ENCODE measurements at regions of chr17 and their contacts with region 1.

Region 1: GRCh38 chr17:28951991-28952975 is 965 bp upstream of the PHF12 start:
- DNase-seq: peak; percentile 87 to 100 (median 94)
- ATAC-seq: peak; percentile 68
- H3K4me3 ChIP-seq: peak overlapping the region; percentile 69 to 77
- H3K4me3 Mint-ChIP-seq: no peak overlapping the region
- H3K27ac ChIP-seq: peak overlapping the region; percentile 85 to 97
- H3K27ac Mint-ChIP-seq: no peak overlapping the region
- H3K4me1 ChIP-seq: peaks cover 28% of the 10 kb centered on the region
- H3K4me1 Mint-ChIP-seq: peaks cover 14% of the 10 kb centered on the region
- H3K27me3 ChIP-seq: no peaks in the 10 kb centered on the region
- H3K27me3 Mint-ChIP-seq: no peaks in the 10 kb centered on the region
- CTCF ChIP-seq: no peak

Region 2: DNA sequence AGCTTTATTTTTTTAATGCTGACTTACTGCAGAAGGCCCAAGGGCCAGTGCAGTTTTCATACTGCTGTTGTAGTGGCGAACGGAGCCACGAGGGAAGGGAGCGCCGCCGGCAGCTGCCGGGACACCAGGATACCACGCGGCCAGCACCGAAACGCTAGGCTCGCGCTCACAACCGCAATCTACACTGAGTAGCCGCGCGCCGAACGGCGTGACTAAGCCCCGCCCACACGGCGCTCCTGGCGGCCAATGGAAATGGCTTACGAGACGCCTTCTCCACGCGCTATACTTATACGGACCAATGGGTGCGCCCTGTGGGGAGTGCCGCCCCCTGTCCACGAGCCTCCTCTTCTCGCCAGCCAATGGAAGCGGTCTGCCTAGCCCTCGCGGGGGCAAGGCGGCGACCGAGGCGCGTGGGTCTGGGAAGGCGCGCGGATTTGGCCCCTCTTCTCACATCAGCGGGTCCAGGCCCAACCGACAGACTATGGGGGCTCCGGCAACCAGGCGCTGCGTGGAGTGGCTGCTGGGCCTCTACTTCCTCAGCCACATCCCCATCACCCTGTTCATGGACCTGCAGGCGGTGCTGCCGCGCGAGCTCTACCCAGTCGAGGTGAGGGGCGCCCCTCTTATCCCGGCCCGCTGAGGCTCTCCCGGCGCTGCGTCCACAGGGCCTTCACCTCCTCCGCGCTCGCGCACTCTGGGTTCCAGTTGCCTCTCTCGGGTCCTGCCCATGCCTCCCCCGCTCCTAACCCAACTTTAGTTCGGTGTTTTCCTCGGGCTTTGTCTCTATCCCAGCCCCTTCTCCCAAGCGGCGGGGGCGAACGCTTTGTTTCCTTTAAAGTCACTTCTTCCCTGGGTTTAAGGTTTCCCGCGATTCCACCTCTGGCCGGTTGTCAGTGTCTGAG is 633.3 kb before region 1 on chr17 and contains the start of gene TMEM97:
- CTCF ChIA-PET with region 1: no interaction called
- POLR2A ChIA-PET with region 1: no interaction called
- intact Hi-C with region 1: loop called (anchors 2 to 5 kb)
- DNase-seq: peak; percentile 86 to 98 (median 93)
- ATAC-seq: peak; percentile 98
- H3K4me3 ChIP-seq: peak within 1 kb of the TSS; percentile 82
- H3K4me3 Mint-ChIP-seq: peak within 1 kb of the TSS; percentile 84
- H3K27ac ChIP-seq: peak within 1 kb of the TSS; percentile 46 to 52
- H3K27ac Mint-ChIP-seq: peak within 1 kb of the TSS; percentile 49
- H3K4me1 ChIP-seq: peaks cover 19% of the 10 kb centered on the region
- H3K4me1 Mint-ChIP-seq: peaks cover 19% of the 10 kb centered on the region
- H3K27me3 ChIP-seq: no peaks in the 10 kb centered on the region
- H3K27me3 Mint-ChIP-seq: no peaks in the 10 kb centered on the region
- CTCF ChIP-seq: no peak
- total RNA-seq, gene TMEM97: 3.7 to 4.6 TPM

Region 3: DNA sequence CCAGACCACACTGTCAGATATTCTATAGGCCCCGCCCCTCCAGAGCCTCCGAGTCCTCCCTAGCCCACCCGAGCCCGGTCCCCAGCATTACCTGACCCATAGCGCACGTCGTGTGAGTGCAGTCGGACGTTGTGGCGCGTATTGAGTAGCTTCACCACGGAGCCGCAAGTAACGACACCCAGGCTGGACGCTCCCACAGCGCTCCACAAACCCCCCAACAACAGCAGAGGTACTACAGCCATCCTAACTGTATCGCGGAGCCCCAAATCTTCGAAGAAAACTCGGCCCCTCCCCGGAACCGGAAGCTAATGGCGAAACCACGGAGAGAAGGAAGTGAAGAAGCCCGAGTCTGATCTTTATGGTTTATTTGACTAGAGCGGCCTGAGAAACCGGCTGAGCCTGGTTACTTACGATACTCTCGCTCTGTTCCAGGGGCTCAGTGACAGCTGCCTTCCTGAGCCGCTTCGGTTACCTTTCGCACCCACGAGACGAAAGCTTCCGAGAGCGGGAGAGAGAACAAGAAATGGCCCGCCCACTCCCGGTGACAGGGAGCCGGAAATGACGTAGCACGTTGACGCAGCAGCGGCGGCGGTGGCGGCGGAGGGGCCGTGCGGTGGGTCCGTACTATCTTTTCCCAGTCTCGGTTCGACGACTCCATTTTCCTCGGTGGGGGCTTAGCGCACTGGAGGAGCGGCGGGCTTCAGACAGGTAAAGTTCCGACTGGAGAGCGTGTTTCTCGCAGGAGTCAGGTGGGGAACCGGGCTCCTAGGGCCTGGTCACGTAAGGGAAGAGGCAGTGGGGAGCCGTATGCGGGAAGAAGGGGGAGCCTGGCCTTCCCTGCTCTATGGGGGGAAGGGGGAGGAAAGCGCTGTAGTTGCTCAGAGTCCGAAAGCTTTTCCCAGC is 290.4 kb before region 1 on chr17 and contains the starts of genes SDF2 and SUPT6H:
- CTCF ChIA-PET with region 1: no interaction called
- POLR2A ChIA-PET with region 1: no interaction called
- intact Hi-C with region 1: loop called in 1 of 2 experiments (anchors 5 kb)
- DNase-seq: peak; percentile 83 to 97 (median 96)
- ATAC-seq: peak; percentile 85
- H3K4me3 ChIP-seq: peak within 1 kb of the TSS; percentile 91 to 94
- H3K4me3 Mint-ChIP-seq: peak within 1 kb of the TSS; percentile 98
- H3K27ac ChIP-seq: peak within 1 kb of the TSS; percentile 98 to 99
- H3K27ac Mint-ChIP-seq: peak within 1 kb of the TSS; percentile 99
- H3K4me1 ChIP-seq: peaks cover 43% of the 10 kb centered on the region
- H3K4me1 Mint-ChIP-seq: peaks cover 60% of the 10 kb centered on the region
- H3K27me3 ChIP-seq: no peaks in the 10 kb centered on the region
- H3K27me3 Mint-ChIP-seq: no peaks in the 10 kb centered on the region
- CTCF ChIP-seq: peak; percentile 20
- total RNA-seq, gene SDF2: 30.4 to 38.3 TPM
- total RNA-seq, gene SUPT6H: 163 to 169 TPM

Region 4: DNA sequence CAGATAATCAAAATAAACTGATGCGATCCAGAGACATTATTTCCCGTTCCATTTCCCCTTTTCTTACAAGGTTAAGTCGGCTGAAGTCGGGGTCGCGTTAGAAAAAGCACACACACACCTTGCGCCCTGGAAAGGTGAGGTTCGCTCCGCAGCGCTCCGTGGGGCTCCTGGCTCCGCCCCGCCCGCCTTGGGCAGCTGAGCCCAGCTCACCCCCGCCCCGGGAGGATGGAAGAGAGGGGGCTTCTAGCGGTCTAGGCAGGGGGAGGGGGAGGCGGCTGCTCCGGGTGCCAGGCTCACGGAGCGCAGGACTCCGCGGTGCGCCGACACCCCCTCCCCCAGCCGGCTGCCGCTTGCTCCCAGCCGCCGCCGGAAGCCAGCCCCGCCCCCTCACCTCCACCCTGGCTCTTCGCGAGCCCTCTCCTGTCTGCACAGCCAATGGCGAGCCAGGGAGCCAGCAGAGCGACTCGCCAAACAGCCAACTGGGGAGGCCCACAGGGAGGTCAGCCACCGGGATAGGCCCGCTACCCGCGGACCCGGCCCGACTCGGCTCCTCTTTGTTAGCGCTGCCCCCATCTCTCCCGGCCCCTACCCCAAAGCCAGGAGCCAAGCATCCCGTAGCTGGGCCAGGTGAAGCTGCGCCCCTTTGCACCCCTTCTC is 140.1 kb before region 1 on chr17:
- CTCF ChIA-PET with region 1: interaction called, 3 read pairs
- POLR2A ChIA-PET with region 1: interaction called, 3 read pairs
- intact Hi-C with region 1: loop called in 1 of 2 experiments (anchors 1 kb)
- DNase-seq: peak; percentile 90 to 98 (median 96)
- ATAC-seq: peak; percentile 96
- H3K4me3 ChIP-seq: peak overlapping the region; percentile 67 to 99
- H3K4me3 Mint-ChIP-seq: peak overlapping the region; percentile 94
- H3K27ac ChIP-seq: peak overlapping the region; percentile 93 to 96
- H3K27ac Mint-ChIP-seq: peak overlapping the region; percentile 93
- H3K4me1 ChIP-seq: peaks cover 18% of the 10 kb centered on the region
- H3K4me1 Mint-ChIP-seq: peaks cover 35% of the 10 kb centered on the region
- H3K27me3 ChIP-seq: no peaks in the 10 kb centered on the region
- H3K27me3 Mint-ChIP-seq: no peaks in the 10 kb centered on the region
- CTCF ChIP-seq: no peak

Region 5: DNA sequence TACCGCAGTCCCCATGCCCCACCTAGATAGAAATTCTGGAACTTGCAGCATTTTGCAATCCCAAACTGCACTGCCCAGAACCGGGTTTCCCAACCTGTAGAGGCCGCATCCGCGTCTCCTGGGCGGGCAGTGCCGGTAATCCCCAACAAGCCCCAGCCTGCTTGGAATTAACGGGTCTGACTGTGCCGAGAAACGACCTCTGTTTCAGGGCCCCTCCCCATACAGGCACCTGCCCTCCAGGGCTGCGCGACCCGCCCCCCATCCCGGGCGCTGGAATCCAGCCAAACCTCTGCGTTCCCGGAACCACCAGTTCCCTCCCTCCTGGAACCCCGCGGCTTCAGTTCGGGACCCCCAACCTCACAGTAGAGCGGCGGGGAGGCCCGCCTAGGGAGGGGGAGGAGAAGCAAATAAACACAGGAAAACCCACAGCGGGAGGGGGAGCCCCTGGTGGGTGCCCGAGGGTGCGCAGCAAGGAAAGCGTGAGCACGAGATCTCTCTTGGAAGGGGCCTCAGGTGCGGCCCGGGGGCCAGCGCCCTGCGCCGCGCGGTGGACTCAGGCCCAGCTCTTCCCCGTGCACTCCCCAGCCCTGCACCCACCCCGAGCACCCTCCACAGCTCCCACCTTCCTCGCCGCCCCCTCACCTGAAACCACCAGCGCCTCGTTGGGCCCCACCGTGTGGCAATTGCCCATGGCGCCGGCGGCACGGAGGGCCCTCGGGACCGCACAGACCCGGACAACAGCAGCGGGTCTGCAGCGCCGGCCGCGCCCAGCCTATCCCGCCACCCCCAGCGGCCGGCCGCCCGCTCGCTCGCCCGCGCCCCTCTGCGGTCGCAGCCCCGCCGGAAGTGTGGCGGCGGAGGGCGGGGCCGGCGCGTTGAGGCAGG is 55.2 kb before region 1 on chr17 and contains the start of gene FLOT2:
- CTCF ChIA-PET with region 1: interaction called, 20 read pairs
- POLR2A ChIA-PET with region 1: interaction called, 12 read pairs
- intact Hi-C with region 1: no loop called
- DNase-seq: peak; percentile 37 to 86 (median 75)
- ATAC-seq: peak; percentile 78
- H3K4me3 ChIP-seq: peak within 1 kb of the TSS; percentile 77 to 81
- H3K4me3 Mint-ChIP-seq: peak within 1 kb of the TSS; percentile 96
- H3K27ac ChIP-seq: peak within 1 kb of the TSS; percentile 85 to 88
- H3K27ac Mint-ChIP-seq: peak within 1 kb of the TSS; percentile 96
- H3K4me1 ChIP-seq: peaks cover 63% of the 10 kb centered on the region
- H3K4me1 Mint-ChIP-seq: peaks cover 62% of the 10 kb centered on the region
- H3K27me3 ChIP-seq: no peaks in the 10 kb centered on the region
- H3K27me3 Mint-ChIP-seq: no peaks in the 10 kb centered on the region
- CTCF ChIP-seq: peak; percentile 43
- total RNA-seq, gene FLOT2: 69.7 to 71.6 TPM

Region 6: GRCh38 chr17:28937044-28937729 is 15.1 kb before region 1 on chr17:
- CTCF ChIA-PET with region 1: interaction called, 4 read pairs
- POLR2A ChIA-PET with region 1: interaction called, 44 read pairs
- intact Hi-C with region 1: loop called in 1 of 2 experiments (anchors 1 kb)
- DNase-seq: no peak
- ATAC-seq: no peak
- H3K4me3 ChIP-seq: no peak overlapping the region
- H3K4me3 Mint-ChIP-seq: no peak overlapping the region
- H3K27ac ChIP-seq: no peak overlapping the region
- H3K27ac Mint-ChIP-seq: peak overlapping the region; percentile 70
- H3K4me1 ChIP-seq: peaks cover 46% of the 10 kb centered on the region
- H3K4me1 Mint-ChIP-seq: peaks cover 87% of the 10 kb centered on the region
- H3K27me3 ChIP-seq: no peaks in the 10 kb centered on the region
- H3K27me3 Mint-ChIP-seq: no peaks in the 10 kb centered on the region
- CTCF ChIP-seq: no peak

Region 7: DNA sequence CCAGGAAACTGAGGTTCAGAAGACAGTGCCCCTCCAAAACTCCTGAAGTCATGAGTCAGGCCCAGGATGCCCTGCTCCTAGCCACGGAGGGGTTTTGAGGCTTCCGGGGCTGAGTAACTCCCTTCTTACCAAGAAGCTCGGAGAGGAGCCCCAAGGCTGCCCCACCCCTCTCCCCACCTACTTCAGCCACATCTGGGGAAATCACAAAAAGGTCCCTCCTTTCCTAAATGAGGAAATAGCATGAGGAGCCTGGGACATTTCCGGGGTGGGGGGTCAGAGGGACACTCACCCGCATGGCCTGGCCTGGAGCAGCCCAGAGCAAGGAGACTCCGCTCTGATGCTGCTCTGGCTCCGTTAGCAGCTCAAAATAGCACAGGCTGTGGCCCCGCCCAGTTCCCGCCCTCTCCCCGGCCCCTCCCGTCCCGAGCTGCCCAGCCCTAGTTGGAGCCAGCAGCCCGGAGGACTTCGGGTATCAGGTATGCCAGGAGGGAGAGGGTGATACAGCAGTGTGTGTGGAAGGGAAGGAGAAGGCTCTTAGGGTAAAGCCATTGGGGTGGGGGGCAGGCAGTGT is 187.9 kb after region 1 on chr17:
- CTCF ChIA-PET with region 1: interaction called, 3 read pairs
- POLR2A ChIA-PET with region 1: interaction called, 9 read pairs
- intact Hi-C with region 1: loop called in 1 of 2 experiments (anchors 1 kb)
- DNase-seq: peak; percentile 50 to 91 (median 85)
- ATAC-seq: peak; percentile 72
- H3K4me3 ChIP-seq: peak overlapping the region; percentile 69 to 73
- H3K4me3 Mint-ChIP-seq: peak overlapping the region; percentile 93
- H3K27ac ChIP-seq: peak overlapping the region; percentile 54 to 84
- H3K27ac Mint-ChIP-seq: peak overlapping the region; percentile 100
- H3K4me1 ChIP-seq: peaks cover 50% of the 10 kb centered on the region
- H3K4me1 Mint-ChIP-seq: peaks cover 68% of the 10 kb centered on the region
- H3K27me3 ChIP-seq: no peaks in the 10 kb centered on the region
- H3K27me3 Mint-ChIP-seq: no peaks in the 10 kb centered on the region
- CTCF ChIP-seq: no peak

Measured in CD8-positive, alpha-beta T cell (primary cell).